A673 (cell line): ENCODE measurements at regions of chr2 and their contacts with region 1.

Region 1: GRCh38 chr2:172806493-172806892 is 70.8 kb downstream of the RAPGEF4 start:
- DNase-seq: peak; percentile 62
- H3K4me3 ChIP-seq: no peak overlapping the region
- H3K27ac ChIP-seq: no peak overlapping the region
- H3K4me1 ChIP-seq: no peaks in the 10 kb centered on the region
- H3K27me3 ChIP-seq: no peaks in the 10 kb centered on the region
- CTCF ChIP-seq: peak; percentile 88

Region 2: GRCh38 chr2:171824086-171824485 is 982.4 kb before region 1 on chr2:
- CTCF ChIA-PET with region 1: no interaction called
- POLR2A ChIA-PET with region 1: no interaction called
- intact Hi-C with region 1: no loop called
- DNase-seq: peak; percentile 31
- H3K4me3 ChIP-seq: no peak overlapping the region
- H3K27ac ChIP-seq: no peak overlapping the region
- H3K4me1 ChIP-seq: no peaks in the 10 kb centered on the region
- H3K27me3 ChIP-seq: no peaks in the 10 kb centered on the region
- CTCF ChIP-seq: no peak

Region 3: GRCh38 chr2:172772633-172773032 is 33.9 kb before region 1 on chr2:
- CTCF ChIA-PET with region 1: no interaction called
- POLR2A ChIA-PET with region 1: no interaction called
- intact Hi-C with region 1: no loop called
- DNase-seq: no peak
- H3K4me3 ChIP-seq: no peak overlapping the region
- H3K27ac ChIP-seq: no peak overlapping the region
- H3K4me1 ChIP-seq: no peaks in the 10 kb centered on the region
- H3K27me3 ChIP-seq: peaks cover 17% of the 10 kb centered on the region
- CTCF ChIP-seq: no peak

Region 4: GRCh38 chr2:172931918-172932520 is 125.5 kb after region 1 on chr2:
- CTCF ChIA-PET with region 1: interaction called, 4 read pairs
- POLR2A ChIA-PET with region 1: no interaction called
- intact Hi-C with region 1: loop called (anchors 2 kb)
- DNase-seq: peak; percentile 73
- H3K4me3 ChIP-seq: no peak overlapping the region
- H3K27ac ChIP-seq: no peak overlapping the region
- H3K4me1 ChIP-seq: peaks cover 11% of the 10 kb centered on the region
- H3K27me3 ChIP-seq: no peaks in the 10 kb centered on the region
- CTCF ChIP-seq: peak; percentile 75

Region 5: DNA sequence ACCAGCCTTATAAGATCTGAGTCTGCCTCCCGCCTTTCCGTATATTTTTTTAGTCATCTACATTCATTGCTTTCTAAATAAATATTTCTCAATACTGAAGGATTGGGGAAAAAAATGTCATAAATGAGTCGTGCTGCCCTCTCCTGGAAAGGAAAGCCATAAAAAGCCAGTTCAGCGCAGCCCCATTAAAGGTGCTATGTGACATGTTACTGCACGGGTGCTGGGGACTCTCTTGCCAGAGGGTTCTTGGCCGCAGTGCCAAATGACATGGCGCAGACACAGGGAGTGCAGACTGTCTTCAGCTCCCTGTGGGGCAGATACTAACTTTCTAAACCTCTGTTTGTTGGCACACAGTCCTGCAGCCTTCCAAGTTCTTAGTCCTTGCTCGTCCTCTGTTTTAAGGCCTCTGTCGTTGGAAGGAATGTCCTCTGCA is 215.5 kb after region 1 on chr2:
- CTCF ChIA-PET with region 1: no interaction called
- POLR2A ChIA-PET with region 1: no interaction called
- intact Hi-C with region 1: loop called (anchors 2 kb)
- DNase-seq: peak; percentile 44
- H3K4me3 ChIP-seq: no peak overlapping the region
- H3K27ac ChIP-seq: no peak overlapping the region
- H3K4me1 ChIP-seq: no peaks in the 10 kb centered on the region
- H3K27me3 ChIP-seq: no peaks in the 10 kb centered on the region
- CTCF ChIP-seq: peak; percentile 55

Region 6: GRCh38 chr2:173210270-173211196 is 404.0 kb after region 1 on chr2:
- CTCF ChIA-PET with region 1: no interaction called
- POLR2A ChIA-PET with region 1: no interaction called
- intact Hi-C with region 1: loop called (anchors 10 kb)
- DNase-seq: peak; percentile 86
- H3K4me3 ChIP-seq: no peak overlapping the region
- H3K27ac ChIP-seq: no peak overlapping the region
- H3K4me1 ChIP-seq: peaks cover 4% of the 10 kb centered on the region
- H3K27me3 ChIP-seq: no peaks in the 10 kb centered on the region
- CTCF ChIP-seq: peak; percentile 92